CD4-positive, alpha-beta memory T cell (primary cell): ENCODE measurements at regions of chr1 and their contacts with region 1.

Region 1: GRCh38 chr1:10209905-10210810 is at the start of gene KIF1B:
- DNase-seq: peak; percentile 95 to 98 (median 95)
- H3K4me3 ChIP-seq: peak within 1 kb of the TSS; percentile 64 to 93
- H3K4me3 Mint-ChIP-seq: peak within 1 kb of the TSS; percentile 88 to 95 (median 90)
- H3K27ac ChIP-seq: peak within 1 kb of the TSS; percentile 64
- H3K27ac Mint-ChIP-seq: peak within 1 kb of the TSS; percentile 77 to 90 (median 84)
- H3K4me1 ChIP-seq: peaks cover 17% of the 10 kb centered on the region
- H3K4me1 Mint-ChIP-seq: peaks cover 11 to 35% (median 23%) of the 10 kb centered on the region in 4 donors
- H3K27me3 ChIP-seq: no peaks in the 10 kb centered on the region
- H3K27me3 Mint-ChIP-seq: peaks cover 0 to 3% of the 10 kb centered on the region in 2 donors
- total RNA-seq, gene KIF1B: 16.8 to 18.1 TPM

Region 2: DNA sequence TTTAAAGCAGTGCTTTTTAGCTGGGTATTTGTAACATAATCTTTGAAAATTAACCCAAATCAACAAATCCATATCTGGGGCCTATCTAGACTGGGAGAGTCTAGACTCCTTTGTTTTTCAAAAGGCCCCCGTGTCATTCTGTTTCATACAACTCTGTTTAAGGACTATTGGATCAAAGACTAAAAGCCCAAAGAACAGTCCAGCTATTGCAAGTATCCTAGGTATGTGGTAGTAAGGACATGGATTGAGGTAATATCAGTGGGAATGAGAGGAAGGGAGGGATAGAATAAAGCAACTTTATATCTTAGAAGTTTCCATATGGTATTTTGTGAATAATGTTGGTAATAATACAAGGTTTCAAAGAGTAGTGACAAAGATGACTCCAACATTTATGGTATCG is 18.4 kb after region 1 on chr1:
- CTCF ChIA-PET with region 1: interaction called, 10 read pairs
- POLR2A ChIA-PET with region 1: interaction called, 3 read pairs
- intact Hi-C with region 1: no loop called
- DNase-seq: no peak
- H3K4me3 ChIP-seq: no peak overlapping the region
- H3K4me3 Mint-ChIP-seq: no peak overlapping the region
- H3K27ac ChIP-seq: no peak overlapping the region
- H3K27ac Mint-ChIP-seq: no peak overlapping the region
- H3K4me1 ChIP-seq: no peaks in the 10 kb centered on the region
- H3K4me1 Mint-ChIP-seq: peaks cover 0 to 15% (median 10%) of the 10 kb centered on the region in 4 donors
- H3K27me3 ChIP-seq: no peaks in the 10 kb centered on the region
- H3K27me3 Mint-ChIP-seq: no peaks in the 10 kb centered on the region

Region 3: GRCh38 chr1:10236405-10237156 is 26.4 kb after region 1 on chr1:
- CTCF ChIA-PET with region 1: interaction called, 13 read pairs
- POLR2A ChIA-PET with region 1: no interaction called
- intact Hi-C with region 1: no loop called
- DNase-seq: no peak
- H3K4me3 ChIP-seq: no peak overlapping the region
- H3K4me3 Mint-ChIP-seq: no peak overlapping the region
- H3K27ac ChIP-seq: no peak overlapping the region
- H3K27ac Mint-ChIP-seq: peak overlapping the region in 2 of 7 donors; percentile 0 to 64
- H3K4me1 ChIP-seq: no peaks in the 10 kb centered on the region
- H3K4me1 Mint-ChIP-seq: peaks cover 2 to 7% (median 5%) of the 10 kb centered on the region in 4 donors
- H3K27me3 ChIP-seq: no peaks in the 10 kb centered on the region
- H3K27me3 Mint-ChIP-seq: no peaks in the 10 kb centered on the region

Region 4: DNA sequence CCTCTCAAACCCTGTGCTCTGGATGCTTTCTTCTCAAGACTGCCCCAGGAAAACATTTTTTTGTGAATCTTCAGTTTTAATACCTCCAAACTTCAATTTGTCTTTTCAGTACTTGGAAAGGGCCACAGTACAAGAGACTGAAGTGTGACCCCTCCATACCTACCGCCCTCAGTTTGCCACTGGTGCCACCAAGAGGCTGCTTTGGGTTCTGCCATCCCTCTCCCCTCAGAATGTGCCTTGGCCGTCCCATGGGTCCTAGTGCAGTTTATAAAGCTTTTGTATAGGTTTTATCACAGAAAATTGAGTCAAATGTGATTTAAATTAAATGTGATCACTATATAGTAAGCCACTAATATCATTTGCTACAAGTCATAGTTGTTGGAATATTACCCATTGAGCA is 127.9 kb after region 1 on chr1:
- CTCF ChIA-PET with region 1: interaction called, 39 read pairs
- POLR2A ChIA-PET with region 1: interaction called, 3 read pairs
- intact Hi-C with region 1: loop called (anchors 1 kb)
- DNase-seq: peak; percentile 24 to 42 (median 27)
- H3K4me3 ChIP-seq: no peak overlapping the region
- H3K4me3 Mint-ChIP-seq: no peak overlapping the region
- H3K27ac ChIP-seq: no peak overlapping the region
- H3K27ac Mint-ChIP-seq: no peak overlapping the region
- H3K4me1 ChIP-seq: no peaks in the 10 kb centered on the region
- H3K4me1 Mint-ChIP-seq: no peaks in the 10 kb centered on the region
- H3K27me3 ChIP-seq: no peaks in the 10 kb centered on the region
- H3K27me3 Mint-ChIP-seq: no peaks in the 10 kb centered on the region

Region 5: GRCh38 chr1:10398734-10399623 is 188.8 kb after region 1 on chr1 and contains the start of gene PGD:
- CTCF ChIA-PET with region 1: no interaction called
- POLR2A ChIA-PET with region 1: interaction called, 4 read pairs
- intact Hi-C with region 1: loop called (anchors 1 kb)
- DNase-seq: peak; percentile 94 to 98 (median 95)
- H3K4me3 ChIP-seq: peak within 1 kb of the TSS; percentile 81 to 94
- H3K4me3 Mint-ChIP-seq: peak within 1 kb of the TSS; percentile 93 to 97 (median 95)
- H3K27ac ChIP-seq: peak within 1 kb of the TSS; percentile 76
- H3K27ac Mint-ChIP-seq: peak within 1 kb of the TSS; percentile 81 to 93 (median 86)
- H3K4me1 ChIP-seq: peaks cover 20% of the 10 kb centered on the region
- H3K4me1 Mint-ChIP-seq: peaks cover 8 to 24% (median 18%) of the 10 kb centered on the region in 4 donors
- H3K27me3 ChIP-seq: no peaks in the 10 kb centered on the region
- H3K27me3 Mint-ChIP-seq: no peaks in the 10 kb centered on the region
- total RNA-seq, gene PGD: 32.8 to 37.0 TPM